GM12878 (cell line): ENCODE measurements at regions of chr2 and their contacts with region 1.

Region 1: DNA sequence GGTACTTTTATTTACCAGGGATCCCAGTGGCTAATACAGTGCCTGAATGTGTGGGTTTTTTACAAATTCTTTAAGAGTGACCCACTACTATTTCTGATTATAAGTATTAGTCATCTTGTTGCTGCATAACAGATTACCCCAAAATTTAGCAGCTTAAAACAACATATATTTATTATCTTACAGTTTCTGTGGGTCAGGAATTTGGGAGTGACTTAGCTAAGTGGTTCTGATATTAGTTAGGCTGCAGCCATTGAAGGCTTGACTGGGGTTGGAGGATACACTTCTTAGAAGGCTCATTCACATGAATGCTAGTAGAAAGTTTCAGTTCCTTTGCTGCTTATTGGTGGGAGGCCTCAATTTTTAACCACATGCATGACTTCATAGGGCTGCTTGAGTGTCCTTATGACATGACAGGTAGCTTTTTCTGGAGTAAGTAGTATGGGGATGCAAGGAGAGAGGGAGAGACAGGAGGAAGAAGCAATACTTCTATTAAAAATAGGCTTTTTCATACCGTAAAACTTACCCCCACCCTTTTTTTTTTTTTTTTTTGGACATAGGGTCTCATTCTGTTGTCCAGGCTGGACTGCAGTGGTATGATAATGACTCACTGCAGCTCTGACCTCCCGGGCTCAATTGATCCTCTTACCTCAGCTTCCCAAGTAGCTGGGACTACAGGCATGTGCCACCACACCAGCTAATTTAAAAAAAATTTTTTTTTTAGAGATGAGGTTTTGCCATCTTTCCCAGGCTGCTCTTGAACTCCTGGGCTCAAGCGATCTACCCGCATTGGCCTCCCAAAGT is 13.3 kb upstream of the POLE4 start:
- DNase-seq: peak; percentile 72
- ATAC-seq: peak; percentile 100
- H3K4me3 ChIP-seq: no peak overlapping the region
- H3K27ac ChIP-seq: no peak overlapping the region
- H3K4me1 ChIP-seq: peaks cover 8% of the 10 kb centered on the region
- H3K27me3 ChIP-seq: no peaks in the 10 kb centered on the region
- CTCF ChIP-seq: no peak
- EP300 ChIP-seq: peak in 1 of 2 experiments; percentile 51; a peak in 1 of 4 replicates
- POLR2A ChIP-seq: no peak
- RAD21 ChIP-seq: no peak

Region 2: DNA sequence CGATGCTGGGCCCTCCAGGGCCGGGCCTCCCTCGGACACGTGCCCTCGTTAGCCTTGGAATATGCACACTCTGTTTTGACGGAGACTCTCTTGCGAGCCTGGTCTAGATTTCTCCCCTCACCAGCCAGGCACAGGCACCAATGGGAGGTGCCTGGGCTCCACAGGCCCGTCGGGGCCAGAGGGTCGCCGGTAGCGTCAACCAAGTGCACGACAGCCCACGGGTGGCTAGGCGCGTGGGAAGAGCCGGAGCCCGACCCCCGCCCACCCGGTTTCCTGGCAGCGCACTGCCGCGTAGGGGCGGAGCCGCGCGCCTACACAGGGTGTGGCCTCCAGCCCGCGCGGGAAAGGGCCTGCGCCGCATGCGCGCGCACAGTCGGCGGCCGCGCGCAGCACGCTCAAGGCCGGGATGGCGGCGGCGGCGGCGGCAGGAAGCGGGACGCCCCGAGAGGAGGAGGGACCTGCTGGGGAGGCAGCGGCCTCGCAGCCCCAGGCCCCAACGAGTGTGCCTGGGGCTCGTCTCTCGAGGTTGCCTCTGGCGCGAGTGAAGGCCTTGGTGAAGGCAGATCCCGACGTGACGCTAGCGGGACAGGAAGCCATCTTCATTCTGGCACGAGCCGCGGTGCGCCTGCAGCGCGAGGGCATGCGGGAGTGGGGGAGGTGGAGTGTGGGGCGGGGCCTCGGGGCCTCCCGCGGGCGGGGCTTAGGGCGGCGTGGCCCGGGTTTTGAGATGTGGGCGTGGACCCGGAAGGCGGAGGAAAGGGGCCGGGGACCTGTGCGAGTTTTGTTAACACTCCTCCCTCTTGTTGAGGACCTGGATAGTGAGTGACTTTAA is 13.3 kb after region 1 on chr2 and contains the start of gene POLE4:
- CTCF ChIA-PET with region 1: interaction called, 3 read pairs
- POLR2A ChIA-PET with region 1: interaction called, 4 read pairs
- RAD21 ChIA-PET with region 1: no interaction called
- SMC1A ChIA-PET with region 1: interaction called, 4 read pairs
- in situ Hi-C with region 1: no loop called
- intact Hi-C with region 1: loop called (anchors 1 kb)
- DNase-seq: peak; percentile 68
- ATAC-seq: peak; percentile 97
- H3K4me3 ChIP-seq: peak within 1 kb of the TSS; percentile 78
- H3K27ac ChIP-seq: peak within 1 kb of the TSS; percentile 93
- H3K4me1 ChIP-seq: peaks cover 8% of the 10 kb centered on the region
- H3K27me3 ChIP-seq: no peaks in the 10 kb centered on the region
- CTCF ChIP-seq: no peak
- EP300 ChIP-seq: no peak
- POLR2A ChIP-seq: peak; percentile 98
- RAD21 ChIP-seq: no peak
- polyA plus RNA-seq, gene POLE4: 48.8 to 86.2 TPM